ENCODE measurements at regions of chr5 and their contacts with region 1.

Region 1: DNA sequence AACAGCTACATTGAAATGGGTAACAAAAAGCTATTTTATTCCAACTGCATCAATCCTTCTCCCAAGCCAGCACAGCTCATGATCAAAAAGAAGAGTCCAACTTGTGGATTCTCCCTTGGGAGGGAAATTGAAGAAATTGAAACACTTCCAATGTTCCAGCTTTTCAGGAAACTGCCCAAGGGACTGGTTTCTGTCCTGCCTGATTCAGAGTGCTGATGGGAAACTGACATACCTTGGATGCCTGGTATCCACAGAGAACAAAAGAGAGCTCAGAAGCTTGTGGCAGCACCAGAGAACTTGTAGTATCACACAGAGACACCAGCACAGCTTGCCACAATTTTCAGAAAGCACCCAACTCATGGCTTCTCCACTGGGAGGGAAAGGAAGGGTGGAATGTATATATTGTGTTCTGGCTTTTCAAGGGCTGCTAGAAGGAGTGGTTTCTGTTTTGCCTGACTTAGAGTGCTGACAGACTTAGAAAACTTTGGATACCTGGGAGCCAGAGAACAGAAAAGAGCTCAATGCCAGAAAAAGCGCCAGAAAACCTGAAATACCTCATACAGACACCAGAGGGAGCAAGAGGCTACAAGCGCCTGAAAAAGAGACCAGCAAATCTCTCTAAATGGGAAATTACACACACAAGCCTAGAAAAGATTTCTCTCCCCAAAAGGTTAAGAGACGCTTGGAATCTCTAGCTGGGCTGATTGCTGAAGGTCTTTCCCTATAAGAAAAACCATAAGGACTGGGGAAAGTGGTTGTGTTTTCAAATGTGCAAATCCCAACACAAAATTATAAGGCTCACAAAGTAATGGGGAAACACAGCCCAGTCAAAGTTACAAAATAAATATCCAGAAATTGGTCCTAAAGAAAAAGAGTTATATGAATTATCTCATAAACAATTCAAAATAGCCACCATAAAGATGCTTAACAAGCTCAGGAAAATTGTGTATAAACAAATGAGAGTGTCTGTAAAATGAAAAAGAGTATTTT is 178.8 kb downstream of the SPOCK1 start:
- DNase-seq: peak in 1 of 2 donors; percentile 44
- ATAC-seq: peak in 1 of 3 donors; percentile 67
- H3K4me3 ChIP-seq: no peak overlapping the region
- H3K4me3 Mint-ChIP-seq: no peak overlapping the region
- H3K27ac ChIP-seq: no peak overlapping the region
- H3K27ac Mint-ChIP-seq: no peak overlapping the region
- H3K4me1 ChIP-seq: no peaks in the 10 kb centered on the region
- H3K4me1 Mint-ChIP-seq: no peaks in the 10 kb centered on the region
- H3K27me3 ChIP-seq: no peaks in the 10 kb centered on the region
- H3K27me3 Mint-ChIP-seq: peaks cover 6 to 30% of the 10 kb centered on the region in 2 donors
- CTCF ChIP-seq: peak; percentile 71

Region 2: GRCh38 chr5:137078171-137078665 is 242.1 kb before region 1 on chr5:
- intact Hi-C with region 1: no loop called
- DNase-seq: no peak
- ATAC-seq: no peak
- H3K4me3 ChIP-seq: no peak overlapping the region
- H3K4me3 Mint-ChIP-seq: no peak overlapping the region
- H3K27ac ChIP-seq: no peak overlapping the region
- H3K27ac Mint-ChIP-seq: no peak overlapping the region
- H3K4me1 ChIP-seq: no peaks in the 10 kb centered on the region
- H3K4me1 Mint-ChIP-seq: no peaks in the 10 kb centered on the region
- H3K27me3 ChIP-seq: no peaks in the 10 kb centered on the region
- H3K27me3 Mint-ChIP-seq: peaks cover 0 to under 1% of the 10 kb centered on the region in 2 donors
- CTCF ChIP-seq: no peak

Region 3: GRCh38 chr5:137498736-137499505 is 178.6 kb after region 1 on chr5 and contains the start of gene SPOCK1:
- intact Hi-C with region 1: loop called (anchors 10 kb)
- DNase-seq: peak; percentile 47 to 65
- ATAC-seq: peak; percentile 82 to 98 (median 85)
- H3K4me3 ChIP-seq: no peak within 1 kb of the TSS
- H3K4me3 Mint-ChIP-seq: no peak within 1 kb of the TSS
- H3K27ac ChIP-seq: no peak within 1 kb of the TSS
- H3K27ac Mint-ChIP-seq: no peak within 1 kb of the TSS
- H3K4me1 ChIP-seq: peaks cover 5% of the 10 kb centered on the region
- H3K4me1 Mint-ChIP-seq: peaks cover 0 to 5% of the 10 kb centered on the region in 2 donors
- H3K27me3 ChIP-seq: peaks cover 16% of the 10 kb centered on the region
- H3K27me3 Mint-ChIP-seq: peaks cover 18 to 21% of the 10 kb centered on the region in 2 donors
- CTCF ChIP-seq: peak; percentile 60
- total RNA-seq, gene SPOCK1: 0.09 to 1.6 (median 0.61) TPM

Region 4: GRCh38 chr5:138138949-138139780 is 818.8 kb after region 1 on chr5 and contains the start of gene NME5:
- intact Hi-C with region 1: loop called (anchors 10 kb)
- DNase-seq: no peak
- ATAC-seq: peak in 1 of 3 donors; percentile 20
- H3K4me3 ChIP-seq: no peak within 1 kb of the TSS
- H3K4me3 Mint-ChIP-seq: no peak within 1 kb of the TSS
- H3K27ac ChIP-seq: no peak within 1 kb of the TSS
- H3K27ac Mint-ChIP-seq: no peak within 1 kb of the TSS
- H3K4me1 ChIP-seq: no peaks in the 10 kb centered on the region
- H3K4me1 Mint-ChIP-seq: no peaks in the 10 kb centered on the region
- H3K27me3 ChIP-seq: peaks cover 6% of the 10 kb centered on the region
- H3K27me3 Mint-ChIP-seq: peaks cover 20 to 36% of the 10 kb centered on the region in 2 donors
- CTCF ChIP-seq: no peak
- total RNA-seq, gene NME5: not detected